ENCODE measurements at regions of chr11 and their contacts with region 1.

Region 1: GRCh38 chr11:100676901-100677300 is 10.2 kb upstream of the ARHGAP42 start:
- DNase-seq: no peak
- ATAC-seq: no peak

Region 2: GRCh38 chr11:100419518-100419917 is 257.4 kb before region 1 on chr11:
- intact Hi-C with region 1: no loop called
- DNase-seq: no peak
- ATAC-seq: no peak

Region 3: GRCh38 chr11:100575870-100576705 is 100.8 kb before region 1 on chr11:
- intact Hi-C with region 1: loop called (anchors 5 kb)
- DNase-seq: no peak
- ATAC-seq: peak; percentile 89

Measured in sciatic nerve (tissue), 2 donors.